Activated CD4-positive, alpha-beta memory T cell treated with anti-CD3 and anti-CD28 coated beads for 36 hours (primary cell): ENCODE measurements at regions of chr20 and their contacts with region 1.

Region 1: DNA sequence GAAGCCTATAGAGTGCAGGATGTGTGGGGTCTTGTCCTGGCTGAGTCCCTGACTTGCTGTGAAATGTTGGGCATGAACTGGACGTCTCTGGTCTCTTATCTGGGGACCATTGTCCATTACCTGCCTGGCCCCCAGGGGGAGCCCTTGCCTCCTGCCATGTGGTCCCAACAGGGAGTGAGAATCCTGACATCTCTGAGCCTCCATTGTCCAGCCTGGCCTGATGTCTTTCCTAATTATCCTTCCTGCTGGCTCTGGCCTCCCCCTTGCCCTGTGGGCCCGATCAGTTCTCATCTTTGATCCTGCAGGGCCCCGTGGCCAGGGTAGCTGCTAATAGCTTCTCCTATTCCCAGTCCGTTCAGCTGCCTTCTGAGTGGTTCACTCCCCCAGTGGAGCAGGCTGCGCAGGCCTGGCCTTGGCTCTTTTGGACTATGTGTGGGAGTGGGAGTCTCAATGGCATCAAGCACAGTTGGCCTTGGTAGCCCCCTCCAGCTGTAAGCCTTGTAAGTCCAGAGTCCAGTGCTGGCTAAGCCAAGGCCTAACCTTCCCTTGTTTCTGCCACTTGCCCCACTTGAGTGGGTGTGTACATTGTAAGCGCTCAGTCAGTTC is 77.9 kb upstream of the RALY start:
- DNase-seq: peak; percentile 68
- H3K4me3 Mint-ChIP-seq: no peak overlapping the region
- H3K27ac Mint-ChIP-seq: no peak overlapping the region
- H3K4me1 Mint-ChIP-seq: peaks cover 15% of the 10 kb centered on the region
- H3K27me3 Mint-ChIP-seq: no peaks in the 10 kb centered on the region

Region 2: GRCh38 chr20:33791959-33792597 is 123.8 kb before region 1 on chr20:
- CTCF ChIA-PET with region 1: interaction called, 13 read pairs
- POLR2A ChIA-PET with region 1: no interaction called
- intact Hi-C with region 1: loop called (anchors 1 kb)
- DNase-seq: peak; percentile 60
- H3K4me3 Mint-ChIP-seq: no peak overlapping the region
- H3K27ac Mint-ChIP-seq: no peak overlapping the region
- H3K4me1 Mint-ChIP-seq: peaks cover 7% of the 10 kb centered on the region
- H3K27me3 Mint-ChIP-seq: no peaks in the 10 kb centered on the region

Region 3: GRCh38 chr20:33925867-33926266 is 10.0 kb after region 1 on chr20:
- CTCF ChIA-PET with region 1: interaction called, 12 read pairs
- POLR2A ChIA-PET with region 1: interaction called, 3 read pairs
- intact Hi-C with region 1: no loop called
- DNase-seq: no peak
- H3K4me3 Mint-ChIP-seq: no peak overlapping the region
- H3K27ac Mint-ChIP-seq: no peak overlapping the region
- H3K4me1 Mint-ChIP-seq: peaks cover 1% of the 10 kb centered on the region
- H3K27me3 Mint-ChIP-seq: peaks cover 4% of the 10 kb centered on the region

Region 4: DNA sequence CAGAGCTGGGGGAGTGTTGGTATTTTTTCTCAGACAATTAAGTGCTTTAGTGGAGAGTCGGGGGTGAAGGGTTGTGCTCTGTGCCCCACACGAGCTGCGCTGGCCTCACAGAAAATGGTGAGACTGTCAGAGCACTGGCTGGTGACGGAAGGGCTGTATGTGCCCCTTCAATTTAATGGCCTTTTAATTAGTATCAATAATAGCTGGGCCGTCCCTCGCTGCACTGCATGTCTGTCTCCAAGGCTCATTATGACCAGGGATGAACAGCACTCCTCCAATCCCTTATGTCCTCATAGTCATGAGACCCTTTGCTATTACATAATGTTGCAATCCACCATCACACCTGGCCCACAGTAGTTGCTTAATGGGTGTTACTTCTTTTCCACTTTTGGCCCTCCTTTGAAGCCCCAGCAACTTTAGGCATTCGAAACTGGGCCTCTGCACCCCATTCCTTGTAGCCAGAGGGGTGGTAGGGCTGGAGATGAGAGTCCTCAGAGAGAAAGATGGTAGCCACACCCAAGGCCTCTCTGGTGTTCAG is 68.4 kb after region 1 on chr20:
- CTCF ChIA-PET with region 1: no interaction called
- POLR2A ChIA-PET with region 1: no interaction called
- intact Hi-C with region 1: no loop called
- DNase-seq: no peak
- H3K4me3 Mint-ChIP-seq: no peak overlapping the region
- H3K27ac Mint-ChIP-seq: no peak overlapping the region
- H3K4me1 Mint-ChIP-seq: no peaks in the 10 kb centered on the region
- H3K27me3 Mint-ChIP-seq: peaks cover 3% of the 10 kb centered on the region

Region 5: GRCh38 chr20:34069341-34070078 is 153.7 kb after region 1 on chr20:
- CTCF ChIA-PET with region 1: interaction called, 49 read pairs
- POLR2A ChIA-PET with region 1: no interaction called
- intact Hi-C with region 1: no loop called
- DNase-seq: peak; percentile 71
- H3K4me3 Mint-ChIP-seq: no peak overlapping the region
- H3K27ac Mint-ChIP-seq: no peak overlapping the region
- H3K4me1 Mint-ChIP-seq: peaks cover 38% of the 10 kb centered on the region
- H3K27me3 Mint-ChIP-seq: no peaks in the 10 kb centered on the region